Endothelial cell of umbilical vein (primary cell): ENCODE measurements at regions of chr15 and their contacts with region 1.

Region 1: DNA sequence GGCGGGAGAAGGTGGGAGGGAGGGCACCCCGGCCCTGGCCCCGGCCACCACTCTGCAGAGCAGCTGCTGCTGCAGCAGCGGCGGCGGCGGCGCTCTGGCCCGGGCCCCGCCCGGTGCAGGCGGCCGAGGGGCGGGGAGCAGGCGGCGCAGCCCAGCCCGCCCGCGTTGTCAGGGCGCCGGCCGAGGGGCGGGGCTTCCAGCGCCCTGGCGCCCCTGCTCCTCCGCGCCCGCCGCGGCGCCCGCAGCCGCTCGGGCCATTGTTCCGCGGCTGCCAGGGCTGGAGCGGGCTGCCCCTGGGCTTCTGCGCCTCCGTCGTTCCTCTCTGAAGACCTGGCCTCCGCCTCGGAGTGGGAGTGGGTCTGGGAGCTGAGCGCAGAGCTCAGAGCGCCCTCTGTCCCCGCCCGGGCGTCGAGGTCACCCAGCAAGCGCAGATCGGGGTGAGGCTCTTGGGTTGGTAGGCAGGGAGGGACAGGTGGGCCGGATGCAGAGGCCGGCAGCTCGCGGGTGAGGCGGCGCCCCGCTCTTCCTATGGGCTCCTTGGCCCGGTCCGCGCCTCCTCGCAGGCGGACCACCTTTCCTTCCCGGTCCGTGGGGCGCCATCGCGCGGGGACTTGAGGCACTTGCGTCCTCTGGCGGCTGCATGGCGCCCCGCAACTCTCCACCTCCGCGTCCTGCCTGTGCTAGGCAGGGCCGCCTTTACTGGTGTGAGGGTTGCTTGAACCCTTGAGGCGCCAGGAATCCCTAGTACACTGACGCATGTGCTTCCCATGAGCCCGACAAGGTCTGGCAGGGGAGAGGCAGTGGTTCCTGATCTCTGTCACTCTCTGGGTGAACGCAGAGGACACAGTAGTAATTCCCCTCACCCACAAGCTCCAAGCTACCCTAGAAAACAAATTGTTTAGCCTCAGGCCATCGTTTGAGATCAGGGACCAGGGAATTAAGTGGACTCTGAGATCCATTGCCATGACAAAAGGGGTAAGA is at the start of gene LPCAT4:
- DNase-seq: peak; percentile 88
- H3K4me3 ChIP-seq: peak within 1 kb of the TSS; percentile 79 to 94 (median 83)
- H3K27ac ChIP-seq: peak within 1 kb of the TSS; percentile 87
- H3K4me1 ChIP-seq: peaks cover 20% of the 10 kb centered on the region
- H3K27me3 ChIP-seq: no peaks in the 10 kb centered on the region
- CTCF ChIP-seq: peak; percentile 94 to 98
- POLR2A ChIP-seq: peak; percentile 93
- total RNA-seq, gene LPCAT4: 44.0 and 49.3 TPM in 2 replicates

Region 2: GRCh38 chr15:34101366-34102175 is 265.8 kb before region 1 on chr15 and contains the starts of genes EMC7 and PGBD4:
- CTCF ChIA-PET with region 1: interaction called, 3 read pairs
- POLR2A ChIA-PET with region 1: no interaction called
- dilution Hi-C with region 1: no loop called
- intact Hi-C with region 1: loop called (anchors 2 kb)
- DNase-seq: peak; percentile 99
- H3K4me3 ChIP-seq: peak within 1 kb of the TSS; percentile 66 to 90 (median 66)
- H3K27ac ChIP-seq: peak within 1 kb of the TSS; percentile 78
- H3K4me1 ChIP-seq: peaks cover 17% of the 10 kb centered on the region
- H3K27me3 ChIP-seq: no peaks in the 10 kb centered on the region
- CTCF ChIP-seq: no peak
- POLR2A ChIP-seq: peak; percentile 85
- total RNA-seq, gene EMC7: 69.9 and 70.6 TPM in 2 replicates
- total RNA-seq, gene PGBD4: 1.1 TPM in 2 replicates

Region 3: GRCh38 chr15:34209421-34210282 is 157.7 kb before region 1 on chr15 and contains the start of gene KATNBL1:
- CTCF ChIA-PET with region 1: interaction called, 25 read pairs
- POLR2A ChIA-PET with region 1: no interaction called
- dilution Hi-C with region 1: no loop called
- intact Hi-C with region 1: loop called (anchors 1 kb)
- DNase-seq: peak; percentile 93
- H3K4me3 ChIP-seq: peak within 1 kb of the TSS; percentile 96 to 100 (median 99)
- H3K27ac ChIP-seq: peak within 1 kb of the TSS; percentile 88
- H3K4me1 ChIP-seq: peaks cover 7% of the 10 kb centered on the region
- H3K27me3 ChIP-seq: no peaks in the 10 kb centered on the region
- CTCF ChIP-seq: peak; percentile 93 to 94
- POLR2A ChIP-seq: peak; percentile 94
- total RNA-seq, gene KATNBL1: 56.8 and 57.9 TPM in 2 replicates

Region 4: DNA sequence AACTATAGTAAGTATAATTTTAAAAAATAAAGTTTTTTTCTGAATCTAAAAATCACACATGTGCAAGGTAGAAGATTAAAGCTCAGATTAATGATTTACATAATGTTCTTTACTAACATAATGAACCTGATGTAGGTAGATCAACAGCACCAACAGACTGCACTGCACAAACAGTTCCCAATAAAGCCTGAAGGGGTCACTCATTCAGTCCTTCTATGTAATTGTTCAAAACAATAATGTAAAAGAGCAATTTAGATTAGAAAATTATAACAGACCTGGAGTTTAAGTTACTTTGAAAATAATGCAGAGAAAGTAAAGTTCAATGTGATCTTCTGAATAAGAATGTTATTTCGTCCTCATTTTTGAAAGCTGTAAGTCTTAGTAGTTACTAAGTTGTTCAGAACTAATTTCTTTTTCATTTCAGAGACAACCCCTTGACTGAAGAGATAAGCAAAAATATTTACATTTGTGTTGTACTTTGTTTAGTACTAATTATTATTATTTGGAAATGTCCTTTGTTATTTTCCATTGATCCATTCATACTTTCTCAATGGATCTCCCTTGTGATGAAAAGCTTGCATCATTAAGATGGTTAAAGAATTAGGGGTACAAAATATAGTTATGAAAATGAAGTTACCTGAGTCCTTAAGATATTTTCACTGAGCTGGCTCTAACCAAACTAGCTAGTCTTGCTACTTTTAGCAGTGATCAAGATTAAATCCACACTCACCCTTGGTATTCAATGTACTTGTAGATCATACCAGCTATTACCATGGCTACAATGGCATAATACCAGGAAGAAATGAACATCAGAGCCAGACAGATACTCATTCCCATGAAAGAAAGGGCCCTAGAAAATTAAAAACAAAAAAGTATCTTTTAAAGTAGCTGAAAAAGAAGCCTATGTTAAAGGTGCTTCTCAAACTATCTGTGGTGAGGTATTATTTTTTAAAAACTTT is 125.7 kb before region 1 on chr15:
- CTCF ChIA-PET with region 1: interaction called, 77 read pairs
- POLR2A ChIA-PET with region 1: no interaction called
- dilution Hi-C with region 1: no loop called
- intact Hi-C with region 1: loop called (anchors 1 kb)
- DNase-seq: peak; percentile 67
- H3K4me3 ChIP-seq: no peak overlapping the region
- H3K27ac ChIP-seq: no peak overlapping the region
- H3K4me1 ChIP-seq: peaks cover 21% of the 10 kb centered on the region
- H3K27me3 ChIP-seq: no peaks in the 10 kb centered on the region
- CTCF ChIP-seq: peak; percentile 47 to 51
- POLR2A ChIP-seq: no peak

Region 5: GRCh38 chr15:34342737-34343575 is 24.4 kb before region 1 on chr15 and contains the starts of genes NOP10 and NUTM1:
- CTCF ChIA-PET with region 1: interaction called, 39 read pairs
- POLR2A ChIA-PET with region 1: interaction called, 3 read pairs
- dilution Hi-C with region 1: no loop called
- intact Hi-C with region 1: loop called (anchors 1 kb)
- DNase-seq: peak; percentile 94
- H3K4me3 ChIP-seq: peak within 1 kb of the TSS; percentile 26 to 89 (median 66)
- H3K27ac ChIP-seq: peak within 1 kb of the TSS; percentile 76
- H3K4me1 ChIP-seq: peaks cover 11% of the 10 kb centered on the region
- H3K27me3 ChIP-seq: no peaks in the 10 kb centered on the region
- CTCF ChIP-seq: peak; percentile 87 to 99
- POLR2A ChIP-seq: peak; percentile 94
- total RNA-seq, gene NOP10: 215 and 225 TPM in 2 replicates
- total RNA-seq, gene NUTM1: not detected in 2 replicates

Region 6: GRCh38 chr15:34587717-34588674 is 220.6 kb after region 1 on chr15:
- CTCF ChIA-PET with region 1: interaction called, 5 read pairs
- POLR2A ChIA-PET with region 1: interaction called, 6 read pairs
- dilution Hi-C with region 1: no loop called
- intact Hi-C with region 1: loop called (anchors 1 kb)
- DNase-seq: peak; percentile 74
- H3K4me3 ChIP-seq: peak overlapping the region in 1 of 3 experiments; percentile 58
- H3K27ac ChIP-seq: no peak overlapping the region
- H3K4me1 ChIP-seq: peaks cover 5% of the 10 kb centered on the region
- H3K27me3 ChIP-seq: no peaks in the 10 kb centered on the region
- CTCF ChIP-seq: peak; percentile 64 to 74
- POLR2A ChIP-seq: no peak

Region 7: GRCh38 chr15:35393403-35393802 is 1026.0 kb after region 1 on chr15:
- CTCF ChIA-PET with region 1: no interaction called
- POLR2A ChIA-PET with region 1: no interaction called
- dilution Hi-C with region 1: no loop called
- intact Hi-C with region 1: no loop called
- DNase-seq: no peak
- H3K4me3 ChIP-seq: no peak overlapping the region
- H3K27ac ChIP-seq: no peak overlapping the region
- H3K4me1 ChIP-seq: peaks cover 7% of the 10 kb centered on the region
- H3K27me3 ChIP-seq: no peaks in the 10 kb centered on the region
- CTCF ChIP-seq: no peak
- POLR2A ChIP-seq: no peak